AG04449 (cell line): ENCODE measurements at regions of chr9 and their contacts with region 1.

Region 1: GRCh38 chr9:114108016-114108833 is 9.1 kb upstream of the KIF12 start:
- DNase-seq: no peak
- H3K4me3 ChIP-seq: no peak overlapping the region
- CTCF ChIP-seq: peak; percentile 97

Region 2: DNA sequence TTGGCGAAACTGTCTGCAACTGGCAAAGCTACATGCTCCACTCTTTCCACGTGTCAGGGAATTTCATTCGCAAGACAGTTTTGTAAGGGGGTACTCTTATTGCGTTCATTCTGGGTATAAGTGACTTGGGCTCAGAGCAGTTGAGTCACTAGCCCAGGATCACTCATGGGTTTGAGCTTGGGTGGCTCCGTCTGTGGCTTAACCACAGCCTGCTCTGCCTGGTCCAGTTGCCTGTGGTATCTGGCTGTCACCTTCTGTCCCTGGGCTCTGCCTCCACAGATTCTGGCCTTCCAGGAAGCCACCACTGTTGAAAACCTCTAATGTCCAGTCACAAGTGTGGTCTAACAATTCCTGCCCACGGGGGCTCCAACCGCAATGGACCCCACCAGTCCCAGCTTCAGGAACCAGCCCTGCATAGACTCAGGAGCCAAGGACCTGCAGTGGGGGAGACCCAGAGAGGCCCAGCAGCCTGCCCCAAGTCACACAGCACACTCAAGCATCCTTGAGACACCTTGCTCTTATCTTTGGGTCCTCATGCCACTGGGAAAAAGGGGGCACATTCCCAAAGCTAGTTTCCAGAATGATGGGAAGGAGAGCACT is 19.6 kb before region 1 on chr9:
- CTCF ChIA-PET with region 1: interaction called, 91 read pairs
- POLR2A ChIA-PET with region 1: no interaction called
- DNase-seq: no peak
- H3K4me3 ChIP-seq: no peak overlapping the region
- CTCF ChIP-seq: no peak

Region 3: DNA sequence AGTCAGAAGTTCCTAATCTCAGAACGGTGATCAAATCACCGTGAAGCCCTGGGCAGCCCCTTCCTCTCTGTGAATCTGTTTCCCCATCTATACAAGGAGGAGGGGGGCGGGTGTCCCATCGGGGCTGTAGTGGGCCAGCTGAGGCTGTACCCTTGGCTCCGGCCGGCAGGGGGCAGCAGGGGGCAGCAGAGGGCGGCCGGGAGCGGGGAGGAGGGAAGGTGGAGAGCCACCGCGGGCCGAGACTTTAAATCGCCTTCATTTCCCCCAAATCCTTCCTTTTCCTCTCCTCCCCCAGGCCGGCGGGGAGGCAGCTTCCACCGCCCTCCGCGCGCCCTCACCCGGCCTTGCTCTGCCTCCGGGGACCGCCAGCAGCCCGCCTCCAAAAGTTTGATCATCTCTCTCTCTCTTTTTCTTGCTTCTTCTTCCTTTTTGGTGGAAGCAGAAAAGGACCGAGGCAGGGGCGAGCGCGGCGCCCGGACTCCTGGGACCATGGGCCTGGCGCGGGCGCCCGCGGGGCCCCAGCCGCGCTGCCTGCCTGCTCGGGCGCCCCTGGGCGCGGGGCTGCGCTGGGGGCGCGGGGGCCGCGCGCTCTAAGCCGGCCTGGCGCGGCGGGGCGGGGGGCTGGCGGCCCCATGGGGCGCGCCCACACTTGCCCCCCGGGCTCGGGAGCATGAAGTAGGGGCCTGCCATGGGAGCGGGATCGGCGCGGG is 47.2 kb after region 1 on chr9 and contains the start of gene COL27A1:
- CTCF ChIA-PET with region 1: interaction called, 100 read pairs
- POLR2A ChIA-PET with region 1: no interaction called
- DNase-seq: no peak
- H3K4me3 ChIP-seq: peak within 1 kb of the TSS; percentile 73
- CTCF ChIP-seq: peak; percentile 98

Region 4: DNA sequence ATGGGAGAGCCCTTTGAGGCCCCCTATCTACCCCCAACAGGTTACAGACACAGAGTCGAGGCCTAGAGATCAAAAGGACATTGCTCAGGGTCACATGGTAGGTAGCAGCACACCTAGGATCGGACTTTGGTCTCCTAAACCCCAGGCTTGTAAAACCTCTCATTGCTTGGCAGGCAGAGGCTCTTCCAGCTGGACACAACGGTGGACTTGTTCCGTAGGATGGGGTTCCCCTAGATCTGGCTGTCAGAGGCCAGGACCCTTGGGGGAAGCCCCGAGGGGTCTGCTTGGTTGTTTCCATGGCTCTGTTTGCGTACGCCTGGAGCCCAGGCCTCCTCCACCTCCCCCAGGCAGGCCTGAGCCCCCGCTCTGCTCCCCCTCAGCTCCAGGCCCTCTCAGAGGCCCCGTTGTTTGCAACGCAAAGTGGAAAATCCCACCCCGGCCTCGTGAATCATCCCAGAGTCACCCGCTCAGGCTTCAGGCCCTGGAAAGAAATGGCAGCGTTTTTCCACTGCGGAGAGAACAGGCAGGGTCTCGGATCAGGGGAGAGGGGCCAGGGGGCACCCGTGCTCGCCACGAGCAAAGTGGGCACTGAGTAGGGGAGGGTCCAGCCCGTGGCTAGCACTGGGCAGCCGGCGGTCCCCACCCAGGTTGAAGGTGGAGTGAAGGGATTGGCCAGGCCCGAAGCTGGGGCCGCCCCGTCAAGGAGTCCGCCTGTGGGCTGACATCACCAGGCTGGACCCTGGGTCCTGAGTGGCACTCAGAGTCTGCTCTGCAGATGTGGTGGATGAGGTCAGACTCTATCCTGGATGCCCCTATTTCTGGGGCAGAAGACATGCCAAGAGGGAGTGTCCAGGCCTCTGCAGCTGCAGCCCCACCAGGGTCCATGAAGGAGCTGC is 66.9 kb after region 1 on chr9:
- CTCF ChIA-PET with region 1: interaction called, 11 read pairs
- POLR2A ChIA-PET with region 1: no interaction called
- DNase-seq: no peak
- H3K4me3 ChIP-seq: no peak overlapping the region
- CTCF ChIP-seq: no peak

Region 5: GRCh38 chr9:114250235-114250568 is 142.0 kb after region 1 on chr9:
- CTCF ChIA-PET with region 1: interaction called, 15 read pairs
- POLR2A ChIA-PET with region 1: no interaction called
- DNase-seq: peak; percentile 73
- H3K4me3 ChIP-seq: no peak overlapping the region
- CTCF ChIP-seq: no peak

Region 6: GRCh38 chr9:114282926-114283325 is 174.7 kb after region 1 on chr9:
- CTCF ChIA-PET with region 1: interaction called, 686 read pairs
- POLR2A ChIA-PET with region 1: no interaction called
- DNase-seq: peak; percentile 96
- H3K4me3 ChIP-seq: no peak overlapping the region
- CTCF ChIP-seq: no peak